ENCODE measurements at regions of chr2 and their contacts with region 1.

Region 1: GRCh38 chr2:178478439-178479274 is at the start of gene FKBP7:
- DNase-seq: peak; percentile 91
- H3K4me3 ChIP-seq: peak within 1 kb of the TSS; percentile 51 to 77 (median 58)
- H3K27ac ChIP-seq: peak within 1 kb of the TSS; percentile 94 to 98 (median 97)
- H3K4me1 ChIP-seq: peaks cover 18 to 46% (median 32%) of the 10 kb centered on the region in 4 donors
- H3K27me3 ChIP-seq: no peaks in the 10 kb centered on the region
- CTCF ChIP-seq: peak; percentile 62 to 87 (median 80)
- EP300 ChIP-seq: peak; percentile 63
- POLR2A ChIP-seq: peak; percentile 73
- total RNA-seq, gene FKBP7: 0.37 to 5.2 (median 2.6) TPM in 3 of 4 donors, not detected in the other

Region 2: GRCh38 chr2:178298785-178299212 is 179.9 kb before region 1 on chr2:
- in situ Hi-C with region 1: no loop called
- intact Hi-C with region 1: no loop called
- DNase-seq: no peak
- H3K4me3 ChIP-seq: no peak overlapping the region
- H3K27ac ChIP-seq: no peak overlapping the region
- H3K4me1 ChIP-seq: peaks cover 0 to 6% (median 0%) of the 10 kb centered on the region in 4 donors
- H3K27me3 ChIP-seq: no peaks in the 10 kb centered on the region
- CTCF ChIP-seq: no peak
- EP300 ChIP-seq: no peak
- POLR2A ChIP-seq: no peak

Region 3: GRCh38 chr2:178450774-178451525 is 27.7 kb before region 1 on chr2 and contains the starts of genes PJVK and PRKRA:
- in situ Hi-C with region 1: no loop called
- intact Hi-C with region 1: loop called (anchors 2 kb)
- DNase-seq: peak; percentile 98
- H3K4me3 ChIP-seq: peak within 1 kb of the TSS; percentile 53 to 99 (median 82)
- H3K27ac ChIP-seq: peak within 1 kb of the TSS; percentile 95 to 100 (median 96)
- H3K4me1 ChIP-seq: peaks cover 6 to 31% (median 22%) of the 10 kb centered on the region in 4 donors
- H3K27me3 ChIP-seq: no peaks in the 10 kb centered on the region
- CTCF ChIP-seq: peak in 1 of 5 experiments; percentile 2
- EP300 ChIP-seq: no peak
- POLR2A ChIP-seq: peak; percentile 95
- total RNA-seq, gene PJVK: 1.6 to 3.2 TPM in 2 of 4 donors, not detected in the others
- total RNA-seq, gene PRKRA: 35.6 to 317 (median 56.9) TPM

Region 4: DNA sequence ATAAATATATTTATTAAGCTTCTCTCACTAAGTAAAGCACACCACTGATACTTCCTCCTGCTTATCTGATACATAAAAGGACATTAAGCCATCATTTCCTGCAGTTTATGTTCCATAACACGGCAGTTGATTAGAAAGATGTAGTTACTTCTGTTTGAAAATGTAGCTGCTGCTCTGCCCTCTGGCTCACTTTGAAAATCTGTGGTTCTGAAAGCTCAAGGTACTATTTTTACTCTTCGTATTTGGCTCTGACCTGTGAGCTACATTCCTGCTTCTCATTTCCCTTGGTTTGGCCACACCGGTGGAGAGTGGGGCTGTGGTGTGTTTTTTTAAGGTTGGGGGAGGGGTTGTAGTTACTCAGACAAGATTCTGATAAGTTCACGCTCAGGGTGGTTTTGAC is 341.3 kb after region 1 on chr2:
- in situ Hi-C with region 1: no loop called
- intact Hi-C with region 1: loop called (anchors 10 kb)
- DNase-seq: no peak
- H3K4me3 ChIP-seq: no peak overlapping the region
- H3K27ac ChIP-seq: no peak overlapping the region
- H3K4me1 ChIP-seq: no peaks in the 10 kb centered on the region
- H3K27me3 ChIP-seq: no peaks in the 10 kb centered on the region
- CTCF ChIP-seq: no peak
- EP300 ChIP-seq: no peak
- POLR2A ChIP-seq: no peak